ENCODE measurements at regions of chr1 and their contacts with region 1.

Region 1: DNA sequence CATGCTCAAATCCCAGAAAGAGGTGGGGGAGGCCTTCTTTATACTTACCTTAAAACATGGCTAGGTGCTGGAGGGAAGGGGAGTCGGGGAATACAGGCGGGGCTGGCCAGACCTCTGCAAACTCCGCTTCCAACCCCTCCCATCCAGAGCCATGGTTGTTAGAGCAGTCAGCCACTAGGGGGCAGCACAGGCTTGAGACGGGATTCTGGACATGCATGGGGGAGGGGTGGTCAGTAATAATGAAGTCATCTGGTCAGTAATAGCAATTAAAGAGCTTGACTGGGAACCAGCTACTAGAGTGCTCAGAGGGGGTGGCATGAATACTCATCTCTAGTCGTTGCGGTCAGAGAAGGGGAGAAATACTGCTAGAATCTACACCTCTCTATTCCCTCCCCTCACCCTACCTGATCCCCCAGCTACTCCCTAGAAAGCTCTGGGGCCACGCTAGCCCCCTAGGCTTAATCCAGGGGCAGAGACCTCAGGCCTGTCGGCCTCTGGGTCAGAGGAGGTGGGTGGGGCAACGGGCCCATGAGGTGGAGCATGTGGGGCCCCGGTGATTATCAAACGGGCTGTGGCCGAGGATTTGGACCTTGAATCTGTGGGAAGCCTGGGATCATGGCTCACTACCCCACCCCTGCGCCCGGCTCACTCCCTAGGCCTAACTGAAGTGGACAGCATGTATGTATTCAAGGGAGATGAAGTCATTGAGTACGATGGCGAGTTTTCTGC is 2.9 kb downstream of the CASQ1 start:
- DNase-seq: peak; percentile 94
- H3K4me3 Mint-ChIP-seq: no peak overlapping the region
- H3K27ac Mint-ChIP-seq: no peak overlapping the region
- H3K4me1 Mint-ChIP-seq: no peaks in the 10 kb centered on the region
- H3K27me3 Mint-ChIP-seq: no peaks in the 10 kb centered on the region
- CTCF ChIP-seq: peak; percentile 100

Region 2: DNA sequence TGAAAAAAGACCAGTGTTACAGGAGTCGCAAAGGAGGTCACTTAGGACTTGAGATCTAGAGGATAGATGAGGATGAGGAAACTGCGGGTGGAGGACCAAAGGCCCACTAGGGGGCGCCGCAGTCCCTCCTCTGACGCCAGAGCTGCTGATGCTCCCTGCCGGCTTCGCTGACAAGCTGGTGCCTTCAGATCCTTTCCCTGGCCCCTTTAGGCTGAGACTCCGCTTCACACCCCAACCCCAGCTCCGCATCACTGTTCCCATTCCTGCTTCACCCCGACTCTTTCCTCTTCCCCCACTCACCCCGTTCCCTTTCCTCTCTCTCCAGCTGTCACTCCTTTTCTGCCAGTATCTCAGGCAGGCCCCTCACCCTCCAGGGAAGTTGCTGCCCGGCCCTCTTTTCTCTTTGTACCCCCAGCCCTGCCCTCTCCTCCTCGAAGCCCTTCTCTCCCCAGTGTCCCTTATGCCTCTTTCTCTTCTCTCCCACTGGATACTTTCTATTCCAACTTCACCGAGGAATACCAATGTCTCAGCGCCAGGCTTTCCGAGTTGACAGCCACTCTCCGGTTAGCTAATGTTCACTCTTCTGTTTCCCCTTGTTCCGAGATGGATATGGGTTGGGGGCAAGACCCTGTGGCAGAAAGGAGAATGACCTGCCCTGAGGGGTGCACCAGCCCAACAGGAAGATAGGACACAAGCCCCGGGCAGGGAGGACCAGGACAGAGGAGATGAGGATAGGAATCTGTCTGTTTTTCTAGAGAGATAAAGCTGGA is 107.4 kb before region 1 on chr1:
- CTCF ChIA-PET with region 1: interaction called, 17 read pairs
- POLR2A ChIA-PET with region 1: no interaction called
- intact Hi-C with region 1: no loop called
- DNase-seq: peak; percentile 82
- H3K4me3 Mint-ChIP-seq: no peak overlapping the region
- H3K27ac Mint-ChIP-seq: no peak overlapping the region
- H3K4me1 Mint-ChIP-seq: peaks cover 5% of the 10 kb centered on the region
- H3K27me3 Mint-ChIP-seq: peaks cover 24% of the 10 kb centered on the region
- CTCF ChIP-seq: peak; percentile 96

Region 3: GRCh38 chr1:160205242-160206035 is 12.2 kb after region 1 on chr1 and contains the start of gene PEA15:
- CTCF ChIA-PET with region 1: interaction called, 124 read pairs
- POLR2A ChIA-PET with region 1: interaction called, 7 read pairs
- intact Hi-C with region 1: no loop called
- DNase-seq: peak; percentile 75
- H3K4me3 Mint-ChIP-seq: peak within 1 kb of the TSS; percentile 82
- H3K27ac Mint-ChIP-seq: peak within 1 kb of the TSS; percentile 17
- H3K4me1 Mint-ChIP-seq: peaks cover 25% of the 10 kb centered on the region
- H3K27me3 Mint-ChIP-seq: no peaks in the 10 kb centered on the region
- CTCF ChIP-seq: no peak
- total RNA-seq, gene PEA15: 183 and 198 TPM in 2 replicates

Region 4: DNA sequence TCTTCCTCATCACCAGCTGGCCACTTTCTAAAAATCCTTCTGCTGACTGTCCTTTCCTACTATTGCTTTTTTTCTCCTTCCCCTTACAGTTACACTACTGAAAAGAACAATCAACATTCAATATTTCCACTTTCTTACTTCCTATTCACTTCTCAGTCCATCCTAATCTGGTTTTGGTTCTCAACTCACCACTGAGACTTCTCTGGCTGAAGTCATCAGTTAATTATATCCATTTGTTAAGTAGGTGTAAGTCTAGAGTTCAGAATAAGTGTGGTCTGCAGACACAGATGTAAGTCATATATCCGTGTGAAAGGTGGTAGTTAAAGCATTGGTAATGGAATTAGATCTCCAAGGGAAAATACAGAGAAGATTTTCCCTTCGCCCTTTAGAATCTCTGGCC is 33.4 kb after region 1 on chr1:
- CTCF ChIA-PET with region 1: interaction called, 129 read pairs
- POLR2A ChIA-PET with region 1: interaction called, 3 read pairs
- intact Hi-C with region 1: no loop called
- DNase-seq: no peak
- H3K4me3 Mint-ChIP-seq: no peak overlapping the region
- H3K27ac Mint-ChIP-seq: no peak overlapping the region
- H3K4me1 Mint-ChIP-seq: no peaks in the 10 kb centered on the region
- H3K27me3 Mint-ChIP-seq: no peaks in the 10 kb centered on the region
- CTCF ChIP-seq: no peak

Region 5: DNA sequence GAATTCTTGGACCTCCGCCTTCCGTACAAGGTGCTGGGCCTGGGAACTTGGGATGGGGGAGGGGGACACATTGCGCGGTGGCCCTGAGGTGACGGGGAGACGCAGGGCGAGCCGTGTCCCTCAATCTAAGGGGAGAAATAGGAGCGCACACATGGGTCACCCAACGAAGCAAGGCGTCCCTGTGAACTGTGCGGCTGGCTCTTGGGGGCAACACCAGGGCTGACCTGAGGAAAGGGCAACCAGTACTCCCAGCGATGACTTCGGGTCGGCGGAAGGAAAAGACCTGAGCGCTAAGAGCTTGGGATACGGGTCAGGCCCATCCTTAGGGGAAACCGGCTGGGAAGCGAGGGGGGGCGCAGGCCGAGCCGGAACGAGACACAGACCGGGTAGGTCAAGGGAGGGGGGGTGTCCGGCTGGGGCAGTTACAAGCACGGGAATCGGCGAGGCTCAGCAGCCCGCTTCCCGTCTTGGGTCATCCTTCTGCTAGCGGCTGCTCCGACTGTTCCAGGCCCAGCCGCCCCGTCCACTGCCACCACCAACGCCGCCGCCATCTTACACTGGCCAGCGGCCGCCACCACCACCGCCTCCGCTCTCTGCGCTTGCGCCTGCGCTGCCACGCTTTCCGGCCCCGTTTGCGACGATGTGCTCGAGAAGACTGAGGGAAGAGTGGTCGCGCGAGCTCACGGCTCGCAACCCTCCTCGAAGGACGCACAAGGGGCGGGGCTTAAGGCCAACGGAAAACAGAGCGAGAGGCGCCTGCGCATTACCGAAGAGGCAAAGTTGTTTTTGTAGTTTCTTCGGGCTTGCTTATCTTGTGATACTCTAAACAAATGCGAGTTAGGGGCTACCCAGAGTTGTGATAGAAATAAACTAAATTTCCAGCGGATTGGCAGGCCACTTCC is 68.9 kb after region 1 on chr1 and contains the start of gene DCAF8:
- CTCF ChIA-PET with region 1: interaction called, 11 read pairs
- POLR2A ChIA-PET with region 1: interaction called, 7 read pairs
- intact Hi-C with region 1: no loop called
- DNase-seq: peak; percentile 99
- H3K4me3 Mint-ChIP-seq: peak within 1 kb of the TSS; percentile 97
- H3K27ac Mint-ChIP-seq: peak within 1 kb of the TSS; percentile 100
- H3K4me1 Mint-ChIP-seq: peaks cover 28% of the 10 kb centered on the region
- H3K27me3 Mint-ChIP-seq: peaks cover 8% of the 10 kb centered on the region
- CTCF ChIP-seq: no peak
- total RNA-seq, gene DCAF8: 181 and 208 TPM in 2 replicates

Region 6: GRCh38 chr1:160416369-160416768 is 223.1 kb after region 1 on chr1:
- CTCF ChIA-PET with region 1: interaction called, 5 read pairs
- POLR2A ChIA-PET with region 1: no interaction called
- intact Hi-C with region 1: loop called (anchors 1 kb)
- DNase-seq: peak; percentile 77
- H3K4me3 Mint-ChIP-seq: no peak overlapping the region
- H3K27ac Mint-ChIP-seq: no peak overlapping the region
- H3K4me1 Mint-ChIP-seq: peaks cover 12% of the 10 kb centered on the region
- H3K27me3 Mint-ChIP-seq: peaks cover 11% of the 10 kb centered on the region
- CTCF ChIP-seq: peak; percentile 83

Measured in MCF 10A (cell line).